Lower leg skin (tissue), 4 donors: ENCODE measurements at regions of chr1 and their contacts with region 1.

Region 1: DNA sequence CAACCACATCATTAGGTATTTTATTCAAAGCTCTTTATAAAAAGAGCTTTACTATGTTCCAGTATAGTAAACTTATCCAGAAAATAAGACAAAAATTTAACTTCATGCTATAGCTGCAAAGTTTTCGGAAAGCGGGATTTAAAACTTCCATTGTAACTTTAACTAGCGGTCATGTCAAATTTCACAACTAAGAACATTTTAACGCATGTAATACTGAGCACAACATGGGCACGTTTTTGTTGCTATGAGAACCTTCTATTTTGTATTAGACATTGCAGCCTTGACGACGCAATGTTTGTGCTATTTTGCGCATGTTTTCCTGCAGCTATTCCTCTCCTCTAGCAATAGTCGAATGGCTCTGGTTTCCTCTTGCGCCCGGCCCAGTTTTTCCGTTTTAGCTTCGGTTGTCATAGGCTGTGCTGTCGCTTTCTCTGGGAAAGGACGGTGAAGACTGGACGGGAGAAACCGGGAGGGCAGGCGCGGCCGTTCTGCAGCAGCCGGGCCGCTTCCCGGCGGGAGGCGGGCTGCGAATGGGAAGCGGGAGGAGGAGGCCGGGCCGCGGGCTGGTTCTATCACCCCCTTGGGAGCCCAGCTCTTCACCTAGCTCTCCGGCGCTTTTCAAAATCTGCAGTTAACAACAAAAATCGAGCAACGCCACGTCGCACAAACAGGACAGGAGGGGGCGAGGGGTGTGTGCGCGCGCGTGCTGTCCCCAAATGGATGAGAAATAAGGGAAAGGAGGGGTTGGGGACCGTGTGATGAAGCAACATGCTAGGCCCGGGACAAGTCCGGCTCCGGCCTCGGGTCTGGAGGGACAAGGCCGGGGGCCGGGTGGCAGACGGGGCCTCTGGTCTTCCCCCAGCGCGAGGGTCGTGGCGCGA is 105.3 kb upstream of the HNRNPU start:
- DNase-seq: peak; percentile 78 to 94
- H3K4me3 ChIP-seq: peak overlapping the region; percentile 36
- CTCF ChIP-seq: no peak
- POLR2A ChIP-seq: no peak

Region 2: GRCh38 chr1:244835276-244836134 is 134.1 kb before region 1 on chr1 and contains the start of gene COX20:
- intact Hi-C with region 1: loop called (anchors 10 kb)
- DNase-seq: peak; percentile 87 to 97
- H3K4me3 ChIP-seq: peak within 1 kb of the TSS; percentile 43
- CTCF ChIP-seq: no peak
- POLR2A ChIP-seq: peak in 1 of 2 donors; percentile 16
- total RNA-seq, gene COX20: 12.3 to 23.4 (median 20.2) TPM